ENCODE measurements at regions of chr16 and their contacts with region 1.

Region 1: GRCh38 chr16:15888072-15888976 is at the start of gene CEP20:
- DNase-seq: peak; percentile 100
- ATAC-seq: peak; percentile 99 to 100 (median 100)
- H3K4me3 ChIP-seq: peak within 1 kb of the TSS; percentile 95
- H3K27ac ChIP-seq: peak within 1 kb of the TSS; percentile 97
- H3K4me1 ChIP-seq: peaks cover 37% of the 10 kb centered on the region
- H3K27me3 ChIP-seq: no peaks in the 10 kb centered on the region
- CTCF ChIP-seq: no peak
- total RNA-seq, gene CEP20: 38.1 to 67.1 (median 56.0) TPM

Region 2: GRCh38 chr16:15829460-15829859 is 58.9 kb before region 1 on chr16:
- intact Hi-C with region 1: loop called in 1 of 2 experiments (anchors 10 kb)
- DNase-seq: peak; percentile 24 to 78
- ATAC-seq: peak in 2 of 4 donors; percentile 54 to 57
- H3K4me3 ChIP-seq: no peak overlapping the region
- H3K27ac ChIP-seq: no peak overlapping the region
- H3K4me1 ChIP-seq: no peaks in the 10 kb centered on the region
- H3K27me3 ChIP-seq: no peaks in the 10 kb centered on the region
- CTCF ChIP-seq: no peak

Region 3: GRCh38 chr16:16048904-16049582 is 160.7 kb after region 1 on chr16:
- intact Hi-C with region 1: no loop called
- DNase-seq: no peak
- ATAC-seq: peak; percentile 81 to 88 (median 84)
- H3K4me3 ChIP-seq: no peak overlapping the region
- H3K27ac ChIP-seq: peak overlapping the region; percentile 60
- H3K4me1 ChIP-seq: peaks cover 30% of the 10 kb centered on the region
- H3K27me3 ChIP-seq: no peaks in the 10 kb centered on the region
- CTCF ChIP-seq: no peak

Measured in psoas muscle (tissue), 8 donors.